Pancreas (tissue), 10 donors: ENCODE measurements at regions of chr20 and their contacts with region 1.

Region 1: DNA sequence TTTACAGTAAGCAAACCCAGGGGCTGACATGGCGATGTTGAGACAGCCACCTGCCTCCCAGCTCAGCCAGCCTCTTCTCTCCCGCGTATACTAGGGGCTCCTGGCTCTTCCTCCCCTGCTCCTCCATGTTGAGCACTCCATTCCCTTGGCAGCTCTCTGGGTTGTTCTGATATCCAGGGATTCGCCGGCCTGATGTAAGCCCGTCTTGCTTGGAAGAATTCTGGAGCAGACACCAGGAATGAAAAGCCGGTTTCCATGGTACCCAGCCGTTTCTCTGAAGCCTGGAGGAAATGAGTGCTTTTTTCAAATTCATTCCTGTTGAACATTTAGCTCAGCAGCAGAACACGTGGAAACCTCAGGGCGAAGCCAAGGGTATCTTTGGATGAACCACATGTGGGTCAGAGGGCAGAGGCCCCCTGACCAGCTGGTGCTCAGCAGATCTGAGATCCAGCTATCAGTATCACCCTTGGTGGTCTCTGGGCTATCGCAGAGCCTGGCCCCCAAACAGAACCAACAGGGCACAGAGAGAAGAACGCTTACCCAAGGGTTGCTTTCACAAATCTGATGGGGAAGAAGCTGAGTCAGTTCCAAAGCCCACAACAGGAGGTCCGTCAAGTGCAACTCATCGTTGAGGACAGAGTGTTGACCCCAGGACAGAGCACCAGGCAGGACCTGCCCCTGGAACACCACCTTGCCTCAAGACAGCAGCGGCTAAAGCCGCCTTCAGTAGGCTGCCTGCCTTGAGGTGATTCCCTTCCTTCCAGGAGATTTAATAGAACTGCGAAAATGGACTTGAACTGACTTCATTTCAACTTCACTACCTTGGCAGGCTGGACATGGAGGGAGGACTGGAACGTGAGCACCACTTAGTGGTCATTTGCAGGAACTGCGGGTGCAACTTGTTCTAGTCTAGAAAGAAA is 96.1 kb upstream of the RIN2 start:
- DNase-seq: peak; percentile 35 to 75 (median 61)
- ATAC-seq: peak; percentile 69 to 95 (median 90)
- H3K4me3 ChIP-seq: no peak overlapping the region
- H3K27ac ChIP-seq: no peak overlapping the region
- H3K4me1 ChIP-seq: no peaks in the 10 kb centered on the region
- H3K27me3 ChIP-seq: no peaks in the 10 kb centered on the region
- CTCF ChIP-seq: peak; percentile 79 to 97 (median 96)

Region 2: GRCh38 chr20:19205977-19206396 is 456.0 kb before region 1 on chr20:
- intact Hi-C with region 1: loop called in 1 of 3 experiments (anchors 5 kb)
- DNase-seq: peak in 5 of 6 donors; percentile 42 to 94 (median 70)
- ATAC-seq: peak; percentile 46 to 85 (median 75)
- H3K4me3 ChIP-seq: no peak overlapping the region
- H3K27ac ChIP-seq: no peak overlapping the region
- H3K4me1 ChIP-seq: no peaks in the 10 kb centered on the region
- H3K27me3 ChIP-seq: peaks cover 0 to 18% (median 4%) of the 10 kb centered on the region in 4 donors
- CTCF ChIP-seq: peak; percentile 70 to 87 (median 80)

Region 3: DNA sequence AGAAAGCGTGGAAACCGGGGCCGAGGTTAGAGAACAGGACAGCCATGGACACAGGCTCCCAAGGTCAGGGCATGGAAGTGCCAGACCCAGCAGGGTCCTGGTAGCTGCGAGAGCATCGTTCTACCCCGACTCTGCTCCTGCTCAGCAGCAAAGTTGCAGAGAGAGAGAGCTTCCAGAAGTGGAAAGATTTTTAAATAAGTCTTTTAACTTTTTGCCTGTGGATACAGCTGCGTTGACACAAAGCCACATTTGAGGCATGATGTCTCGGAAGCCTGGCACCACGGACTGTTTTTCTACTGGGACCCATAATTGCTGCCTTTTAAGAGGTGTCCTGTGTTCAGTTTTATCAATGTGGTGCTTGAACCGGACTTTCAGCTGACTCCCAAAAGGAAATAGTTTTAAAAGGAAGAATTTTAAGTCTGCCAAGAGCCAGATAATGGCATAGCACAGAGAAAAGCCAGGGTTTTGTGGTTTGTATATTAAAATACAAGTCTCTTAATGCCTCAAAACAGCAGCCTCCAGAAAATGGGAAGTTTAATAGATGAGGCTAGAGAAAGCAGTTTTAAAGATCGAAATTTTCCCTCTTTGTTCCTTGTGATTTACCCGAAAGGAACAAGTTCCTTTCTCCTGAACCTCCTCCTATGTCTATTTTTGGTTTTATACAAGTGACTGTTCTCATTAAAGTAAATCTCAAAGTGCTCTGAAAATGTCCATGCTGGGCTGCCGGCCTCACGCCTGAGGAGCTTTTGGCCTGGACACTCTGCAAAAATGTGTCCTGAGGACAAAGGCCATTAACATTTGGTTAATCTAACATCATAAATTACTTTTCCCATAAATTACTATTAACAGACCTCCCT is 187.6 kb after region 1 on chr20:
- intact Hi-C with region 1: no loop called
- DNase-seq: no peak
- ATAC-seq: peak in 1 of 4 donors; percentile 22
- H3K4me3 ChIP-seq: no peak overlapping the region
- H3K27ac ChIP-seq: no peak overlapping the region
- H3K4me1 ChIP-seq: no peaks in the 10 kb centered on the region
- H3K27me3 ChIP-seq: no peaks in the 10 kb centered on the region
- CTCF ChIP-seq: no peak

Region 4: DNA sequence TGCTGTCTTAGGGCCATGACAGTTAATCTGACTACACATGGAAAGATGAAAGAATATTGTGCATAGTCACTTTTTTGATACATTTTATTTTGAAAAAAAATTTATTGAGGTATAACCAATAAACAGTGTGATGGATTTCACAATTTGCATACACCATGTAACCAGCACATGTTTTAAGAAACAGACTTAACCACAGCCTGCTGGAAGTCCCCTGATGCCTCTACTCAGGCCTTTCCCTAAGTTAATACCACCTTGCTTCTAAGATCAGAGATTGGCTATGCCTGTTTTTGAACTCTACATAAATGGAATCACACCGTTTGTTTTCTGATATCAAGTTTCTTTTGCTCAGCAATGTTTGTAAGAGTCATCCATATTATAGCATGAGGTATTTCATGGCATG is 526.7 kb after region 1 on chr20:
- intact Hi-C with region 1: no loop called
- DNase-seq: no peak
- ATAC-seq: no peak
- H3K4me3 ChIP-seq: no peak overlapping the region
- H3K27ac ChIP-seq: no peak overlapping the region
- H3K4me1 ChIP-seq: no peaks in the 10 kb centered on the region
- H3K27me3 ChIP-seq: no peaks in the 10 kb centered on the region
- CTCF ChIP-seq: no peak